MCF 10A (cell line): ENCODE measurements at regions of chr2 and their contacts with region 1.

Region 1: GRCh38 chr2:164430166-164430783 is 191.0 kb downstream of the GRB14 start:
- DNase-seq: peak; percentile 60
- H3K4me3 Mint-ChIP-seq: no peak overlapping the region
- H3K27ac Mint-ChIP-seq: no peak overlapping the region
- H3K4me1 Mint-ChIP-seq: peaks cover under 1% of the 10 kb centered on the region
- H3K27me3 Mint-ChIP-seq: no peaks in the 10 kb centered on the region
- CTCF ChIP-seq: peak; percentile 59

Region 2: GRCh38 chr2:163182764-163183354 is 1247.4 kb before region 1 on chr2:
- CTCF ChIA-PET with region 1: interaction called, 17 read pairs
- POLR2A ChIA-PET with region 1: no interaction called
- intact Hi-C with region 1: loop called (anchors 1 kb)
- DNase-seq: peak; percentile 36
- H3K4me3 Mint-ChIP-seq: no peak overlapping the region
- H3K27ac Mint-ChIP-seq: no peak overlapping the region
- H3K4me1 Mint-ChIP-seq: peaks cover under 1% of the 10 kb centered on the region
- H3K27me3 Mint-ChIP-seq: no peaks in the 10 kb centered on the region
- CTCF ChIP-seq: peak; percentile 51

Region 3: GRCh38 chr2:163345908-163346573 is 1084.2 kb before region 1 on chr2:
- CTCF ChIA-PET with region 1: interaction called, 5 read pairs
- POLR2A ChIA-PET with region 1: no interaction called
- intact Hi-C with region 1: loop called (anchors 1 kb)
- DNase-seq: peak; percentile 75
- H3K4me3 Mint-ChIP-seq: no peak overlapping the region
- H3K27ac Mint-ChIP-seq: no peak overlapping the region
- H3K4me1 Mint-ChIP-seq: peaks cover 17% of the 10 kb centered on the region
- H3K27me3 Mint-ChIP-seq: no peaks in the 10 kb centered on the region
- CTCF ChIP-seq: peak; percentile 48

Region 4: GRCh38 chr2:163692611-163693482 is 737.4 kb before region 1 on chr2:
- CTCF ChIA-PET with region 1: no interaction called
- POLR2A ChIA-PET with region 1: no interaction called
- intact Hi-C with region 1: loop called (anchors 5 kb)
- DNase-seq: no peak
- H3K4me3 Mint-ChIP-seq: peak overlapping the region; percentile 10
- H3K27ac Mint-ChIP-seq: peak overlapping the region; percentile 57
- H3K4me1 Mint-ChIP-seq: peaks cover 29% of the 10 kb centered on the region
- H3K27me3 Mint-ChIP-seq: no peaks in the 10 kb centered on the region
- CTCF ChIP-seq: no peak

Region 5: GRCh38 chr2:164061129-164061746 is 369.0 kb before region 1 on chr2:
- CTCF ChIA-PET with region 1: interaction called, 7 read pairs
- POLR2A ChIA-PET with region 1: no interaction called
- intact Hi-C with region 1: loop called (anchors 2 kb)
- DNase-seq: peak; percentile 58
- H3K4me3 Mint-ChIP-seq: no peak overlapping the region
- H3K27ac Mint-ChIP-seq: no peak overlapping the region
- H3K4me1 Mint-ChIP-seq: no peaks in the 10 kb centered on the region
- H3K27me3 Mint-ChIP-seq: no peaks in the 10 kb centered on the region
- CTCF ChIP-seq: peak; percentile 80

Region 6: GRCh38 chr2:164119370-164119769 is 310.9 kb before region 1 on chr2:
- CTCF ChIA-PET with region 1: no interaction called
- POLR2A ChIA-PET with region 1: no interaction called
- intact Hi-C with region 1: no loop called
- DNase-seq: no peak
- H3K4me3 Mint-ChIP-seq: no peak overlapping the region
- H3K27ac Mint-ChIP-seq: no peak overlapping the region
- H3K4me1 Mint-ChIP-seq: no peaks in the 10 kb centered on the region
- H3K27me3 Mint-ChIP-seq: no peaks in the 10 kb centered on the region
- CTCF ChIP-seq: no peak

Region 7: DNA sequence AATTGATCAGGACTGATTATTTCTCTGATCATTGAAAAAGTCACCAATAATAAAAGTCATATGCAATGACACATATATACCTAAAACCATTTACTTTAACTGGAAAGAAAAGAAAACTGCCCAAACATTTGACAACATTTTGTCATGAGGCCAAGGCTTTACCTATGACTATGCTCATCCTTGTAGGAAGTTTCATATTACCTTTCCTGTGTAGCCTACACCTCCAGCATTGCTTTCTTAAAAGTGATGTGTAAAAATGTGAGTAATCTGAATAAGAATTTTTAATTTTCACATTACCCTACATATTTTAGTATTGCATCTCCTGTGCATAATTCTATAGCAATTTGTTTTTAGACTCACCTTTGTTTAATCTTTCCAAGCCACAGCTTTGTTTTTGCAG is 274.7 kb before region 1 on chr2:
- CTCF ChIA-PET with region 1: no interaction called
- POLR2A ChIA-PET with region 1: no interaction called
- intact Hi-C with region 1: no loop called
- DNase-seq: peak; percentile 17
- H3K4me3 Mint-ChIP-seq: no peak overlapping the region
- H3K27ac Mint-ChIP-seq: no peak overlapping the region
- H3K4me1 Mint-ChIP-seq: peaks cover 17% of the 10 kb centered on the region
- H3K27me3 Mint-ChIP-seq: no peaks in the 10 kb centered on the region
- CTCF ChIP-seq: no peak

Region 8: GRCh38 chr2:164495491-164496223 is 65.4 kb after region 1 on chr2:
- CTCF ChIA-PET with region 1: interaction called, 3 read pairs
- POLR2A ChIA-PET with region 1: no interaction called
- intact Hi-C with region 1: loop called (anchors 5 kb)
- DNase-seq: peak; percentile 63
- H3K4me3 Mint-ChIP-seq: no peak overlapping the region
- H3K27ac Mint-ChIP-seq: no peak overlapping the region
- H3K4me1 Mint-ChIP-seq: no peaks in the 10 kb centered on the region
- H3K27me3 Mint-ChIP-seq: no peaks in the 10 kb centered on the region
- CTCF ChIP-seq: peak; percentile 68